GM10248 (cell line): ENCODE measurements at regions of chr1 and their contacts with region 1.

Region 1: DNA sequence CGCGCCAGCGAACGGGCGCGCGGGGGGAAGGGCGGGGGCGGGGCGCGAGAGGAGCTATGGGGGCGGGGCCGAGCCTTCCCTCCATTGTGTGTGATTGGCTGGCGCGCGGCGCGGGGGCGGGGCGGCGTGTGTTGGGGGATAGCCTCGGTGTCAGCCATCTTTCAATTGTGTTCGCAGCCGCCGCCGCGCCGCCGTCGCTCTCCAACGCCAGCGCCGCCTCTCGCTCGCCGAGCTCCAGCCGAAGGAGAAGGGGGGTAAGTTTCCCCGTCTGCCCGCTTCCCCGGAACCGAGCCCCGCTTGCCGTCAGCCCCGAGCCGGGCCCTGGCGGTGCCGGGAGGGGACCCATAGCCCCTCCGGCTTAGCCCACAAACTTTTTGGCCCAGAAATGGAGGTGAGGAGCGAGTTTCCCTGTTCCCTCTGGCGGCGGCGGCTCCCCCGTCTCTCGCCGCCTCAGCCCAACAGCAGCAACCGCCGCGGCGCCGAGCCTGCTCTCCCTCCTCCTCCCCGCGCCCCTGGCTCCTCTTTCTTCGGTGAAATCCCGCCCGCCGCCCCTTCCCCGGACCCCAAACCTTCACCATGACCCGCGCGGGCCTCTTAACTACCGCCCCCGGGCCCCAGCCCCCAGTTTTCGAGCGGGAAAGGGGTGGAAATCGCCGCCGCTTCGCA is at the start of gene H3-3A:
- DNase-seq: peak; percentile 97
- CTCF ChIP-seq: no peak

Region 2: GRCh38 chr1:225999227-225999911 is 63.3 kb before region 1 on chr1 and contains the start of gene SDE2:
- CTCF ChIA-PET with region 1: interaction called, 8 read pairs
- POLR2A ChIA-PET with region 1: interaction called, 23 read pairs
- DNase-seq: peak; percentile 97
- CTCF ChIP-seq: no peak

Region 3: GRCh38 chr1:226034482-226034881 is 28.2 kb before region 1 on chr1:
- CTCF ChIA-PET with region 1: interaction called, 22 read pairs
- POLR2A ChIA-PET with region 1: interaction called, 18 read pairs
- DNase-seq: no peak
- CTCF ChIP-seq: no peak

Region 4: DNA sequence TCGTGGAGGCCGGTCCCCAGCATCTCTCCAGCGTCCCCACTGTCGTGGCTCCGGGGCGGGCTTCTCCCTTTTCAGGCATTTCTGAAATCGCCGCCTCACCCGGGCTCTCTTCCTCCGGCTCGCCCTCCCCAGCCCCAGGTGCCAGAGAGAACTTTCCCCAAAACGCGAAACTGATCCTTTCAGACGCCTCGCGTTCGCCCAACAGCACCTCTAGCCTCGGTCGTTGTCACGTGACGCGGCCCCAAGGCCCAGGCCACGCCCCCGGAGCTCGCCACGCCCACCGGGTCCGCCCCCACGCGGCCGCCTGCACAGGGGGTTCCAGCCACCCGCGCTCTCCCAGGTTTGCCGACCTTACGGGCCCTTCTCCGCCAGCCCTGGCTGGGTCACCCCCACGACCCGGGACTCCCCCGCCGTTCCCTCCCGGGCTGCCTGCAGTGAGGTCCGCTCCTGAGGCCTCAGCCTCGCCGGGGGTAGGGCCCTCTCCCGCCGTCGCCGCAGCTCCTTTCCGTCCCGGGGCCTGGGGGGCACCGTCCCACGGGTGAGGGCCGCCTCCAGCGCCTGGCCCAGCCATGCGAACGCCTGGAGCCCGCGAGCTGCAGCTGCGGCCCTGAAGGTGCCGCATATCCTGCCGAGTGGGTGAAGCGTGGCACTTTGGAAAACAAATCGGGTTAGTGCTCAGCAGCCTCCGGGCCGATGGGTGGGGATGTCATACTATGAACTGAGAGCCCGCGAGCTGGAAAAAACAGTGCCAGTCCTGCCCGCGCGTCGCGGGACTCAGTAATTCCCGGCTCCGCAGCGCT is 20.8 kb after region 1 on chr1:
- CTCF ChIA-PET with region 1: interaction called, 73 read pairs
- POLR2A ChIA-PET with region 1: interaction called, 12 read pairs
- DNase-seq: peak; percentile 97
- CTCF ChIP-seq: no peak

Region 5: GRCh38 chr1:226100436-226101391 is 38.0 kb after region 1 on chr1:
- CTCF ChIA-PET with region 1: interaction called, 12 read pairs
- POLR2A ChIA-PET with region 1: interaction called, 4 read pairs
- DNase-seq: peak; percentile 60
- CTCF ChIP-seq: no peak